ENCODE measurements at regions of chr3 and their contacts with region 1.

Region 1: GRCh38 chr3:71710906-71711494 is 14.2 kb downstream of the EIF4E3 start:
- DNase-seq: peak; percentile 66
- ATAC-seq: peak; percentile 92
- H3K4me3 ChIP-seq: no peak overlapping the region
- H3K27ac ChIP-seq: no peak overlapping the region
- H3K4me1 ChIP-seq: no peaks in the 10 kb centered on the region; the same call in 1 of the 2 replicates
- H3K27me3 ChIP-seq: peaks cover 19% of the 10 kb centered on the region
- CTCF ChIP-seq: peak; percentile 77
- POLR2A ChIP-seq: no peak
- RAD21 ChIP-seq: peak; percentile 76

Region 2: DNA sequence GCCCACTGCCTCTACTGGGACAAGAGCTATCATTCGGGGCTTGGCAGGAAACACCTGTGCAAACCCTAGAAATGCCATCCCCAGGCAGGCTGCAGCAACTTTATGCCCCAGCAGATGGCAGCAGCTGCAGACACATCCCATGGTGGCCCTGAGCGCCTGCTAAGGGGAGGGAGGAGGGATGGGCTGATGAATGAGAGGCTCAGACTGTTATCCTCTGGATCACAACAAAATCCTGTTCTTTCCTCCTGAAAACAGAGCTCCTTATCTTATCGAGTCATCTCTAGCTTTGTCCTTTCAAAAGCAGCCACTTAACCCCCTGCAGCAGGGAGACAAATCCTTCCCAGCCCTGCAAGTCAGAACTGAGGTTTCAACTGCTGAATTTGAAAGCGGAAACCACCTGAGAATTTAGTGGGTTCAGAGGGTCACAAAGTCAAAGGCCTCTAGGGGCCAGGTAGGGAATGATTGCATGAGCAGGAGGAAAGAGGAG is 164.5 kb after region 1 on chr3:
- CTCF ChIA-PET with region 1: no interaction called
- POLR2A ChIA-PET with region 1: no interaction called
- dilution Hi-C with region 1: no loop called
- in situ Hi-C with region 1: no loop called
- intact Hi-C with region 1: loop called (anchors 5 kb)
- DNase-seq: peak; percentile 53
- ATAC-seq: peak; percentile 99
- H3K4me3 ChIP-seq: no peak overlapping the region
- H3K27ac ChIP-seq: no peak overlapping the region
- H3K4me1 ChIP-seq: no peaks in the 10 kb centered on the region
- H3K27me3 ChIP-seq: peaks cover 6% of the 10 kb centered on the region
- CTCF ChIP-seq: peak; percentile 81
- POLR2A ChIP-seq: 0 out of 2 replicates have a peak, but pooled peaks have one; percentile 27
- RAD21 ChIP-seq: peak; percentile 84

Region 3: GRCh38 chr3:71955240-71956068 is 244.5 kb after region 1 on chr3:
- CTCF ChIA-PET with region 1: no interaction called
- POLR2A ChIA-PET with region 1: no interaction called
- dilution Hi-C with region 1: no loop called
- in situ Hi-C with region 1: no loop called
- intact Hi-C with region 1: loop called (anchors 10 kb)
- DNase-seq: peak; percentile 70
- ATAC-seq: peak; percentile 85
- H3K4me3 ChIP-seq: no peak overlapping the region
- H3K27ac ChIP-seq: no peak overlapping the region
- H3K4me1 ChIP-seq: no peaks in the 10 kb centered on the region
- H3K27me3 ChIP-seq: peaks cover 12% of the 10 kb centered on the region
- CTCF ChIP-seq: peak; percentile 74
- POLR2A ChIP-seq: no peak
- RAD21 ChIP-seq: peak; percentile 87

Region 4: DNA sequence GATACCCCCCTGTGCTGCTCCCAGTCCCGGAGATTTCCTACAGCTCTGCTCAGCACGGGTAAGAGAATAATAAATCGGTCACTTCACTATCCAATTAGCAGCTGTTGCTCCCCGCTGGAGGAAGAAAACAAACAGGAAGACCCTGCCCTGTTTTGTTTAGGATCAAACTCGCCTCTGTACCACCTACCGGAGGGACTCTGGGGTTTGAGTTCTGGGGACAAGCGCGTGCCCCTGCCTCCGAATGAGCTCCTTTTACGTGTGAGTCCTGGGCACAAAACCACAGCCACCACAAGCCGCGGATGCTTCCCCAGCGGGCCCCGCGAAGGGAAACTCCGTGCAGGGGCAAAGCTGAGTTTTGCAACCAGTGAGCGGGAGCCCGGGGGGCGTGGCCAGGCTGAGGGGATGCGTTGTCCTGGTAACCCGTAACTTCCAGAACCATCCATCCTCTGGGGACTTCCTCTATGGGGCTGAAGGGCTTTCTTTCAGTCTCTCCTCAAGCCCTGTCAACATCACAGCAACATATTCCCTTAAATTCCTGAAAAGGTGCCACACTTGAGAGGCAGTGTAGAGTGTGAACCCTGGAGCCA is 389.7 kb after region 1 on chr3:
- CTCF ChIA-PET with region 1: no interaction called
- POLR2A ChIA-PET with region 1: no interaction called
- dilution Hi-C with region 1: no loop called
- in situ Hi-C with region 1: no loop called
- intact Hi-C with region 1: no loop called
- DNase-seq: peak; percentile 60
- ATAC-seq: peak; percentile 94
- H3K4me3 ChIP-seq: peak overlapping the region; percentile 42
- H3K27ac ChIP-seq: no peak overlapping the region
- H3K4me1 ChIP-seq: no peaks in the 10 kb centered on the region
- H3K27me3 ChIP-seq: peaks cover 48% of the 10 kb centered on the region
- CTCF ChIP-seq: no peak
- POLR2A ChIP-seq: no peak
- RAD21 ChIP-seq: no peak

Region 5: DNA sequence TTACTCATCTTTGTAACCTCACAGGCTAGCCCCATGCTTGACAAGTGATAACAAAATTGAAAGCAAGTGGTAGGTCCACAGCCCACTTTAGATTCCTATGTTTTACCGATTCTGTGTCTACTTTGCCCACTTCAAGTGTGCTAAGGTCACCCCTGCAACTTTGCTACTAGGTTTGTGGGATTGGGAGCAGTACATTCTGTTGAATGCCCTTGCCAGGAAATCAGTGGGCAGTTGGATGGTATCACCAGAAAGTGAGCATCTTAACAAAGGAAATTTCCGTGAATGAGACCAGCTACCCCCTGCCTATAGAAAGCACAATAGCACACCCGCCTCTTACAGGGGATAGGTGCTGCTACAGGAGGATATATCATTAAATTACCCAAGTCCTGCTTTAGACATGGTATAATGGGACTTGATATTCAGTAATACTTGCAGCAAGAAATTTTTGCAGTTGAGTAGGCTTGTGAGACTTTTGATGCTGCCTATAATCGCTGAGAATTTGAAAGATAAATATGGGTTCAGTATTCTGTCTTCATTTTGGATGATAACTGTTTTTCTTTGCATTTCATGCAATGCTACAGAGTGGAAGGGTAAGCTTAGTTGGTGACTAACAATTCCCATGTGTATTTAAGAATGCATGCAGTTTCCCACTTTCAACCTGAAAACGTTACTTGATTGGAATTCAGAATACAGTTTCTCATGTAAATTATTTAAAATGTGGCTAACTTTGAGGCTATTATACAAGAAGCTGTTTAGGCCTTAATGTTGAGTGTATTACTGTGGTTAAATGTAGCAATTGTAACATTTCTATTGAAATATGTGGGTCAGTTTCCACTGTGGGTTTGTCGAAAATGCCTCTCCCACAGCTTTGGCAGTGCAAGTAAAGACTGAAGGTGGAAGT is 1359.9 kb after region 1 on chr3:
- CTCF ChIA-PET with region 1: no interaction called
- POLR2A ChIA-PET with region 1: no interaction called
- dilution Hi-C with region 1: no loop called
- in situ Hi-C with region 1: no loop called
- intact Hi-C with region 1: loop called (anchors 5 kb)
- DNase-seq: peak; percentile 92
- ATAC-seq: peak; percentile 81
- H3K4me3 ChIP-seq: no peak overlapping the region
- H3K27ac ChIP-seq: peak overlapping the region; percentile 61
- H3K4me1 ChIP-seq: peaks cover 22% of the 10 kb centered on the region
- H3K27me3 ChIP-seq: no peaks in the 10 kb centered on the region
- CTCF ChIP-seq: no peak
- POLR2A ChIP-seq: no peak
- RAD21 ChIP-seq: no peak